ENCODE measurements at regions of chr4 and their contacts with region 1.

Region 1: GRCh38 chr4:121726642-121727268 is 30.0 kb upstream of the ANXA5 start:
- DNase-seq: no peak
- ATAC-seq: peak; percentile 80 to 98 (median 94)
- H3K4me3 ChIP-seq: no peak overlapping the region
- H3K27ac ChIP-seq: no peak overlapping the region
- H3K4me1 ChIP-seq: no peaks in the 10 kb centered on the region
- H3K27me3 ChIP-seq: no peaks in the 10 kb centered on the region
- CTCF ChIP-seq: peak; percentile 12 to 57 (median 54)

Region 2: GRCh38 chr4:121462660-121463261 is 264.0 kb before region 1 on chr4:
- intact Hi-C with region 1: loop called in 1 of 3 experiments (anchors 10 kb)
- DNase-seq: peak in 2 of 6 donors; percentile 29 to 56
- ATAC-seq: peak; percentile 56 to 85 (median 80)
- H3K4me3 ChIP-seq: no peak overlapping the region
- H3K27ac ChIP-seq: no peak overlapping the region
- H3K4me1 ChIP-seq: no peaks in the 10 kb centered on the region
- H3K27me3 ChIP-seq: no peaks in the 10 kb centered on the region
- CTCF ChIP-seq: peak; percentile 32 to 64 (median 42)

Region 3: GRCh38 chr4:121913667-121914066 is 186.9 kb after region 1 on chr4:
- intact Hi-C with region 1: no loop called
- DNase-seq: no peak
- ATAC-seq: no peak
- H3K4me3 ChIP-seq: no peak overlapping the region
- H3K27ac ChIP-seq: no peak overlapping the region
- H3K4me1 ChIP-seq: no peaks in the 10 kb centered on the region
- H3K27me3 ChIP-seq: no peaks in the 10 kb centered on the region
- CTCF ChIP-seq: no peak

Measured in pancreas (tissue), 10 donors.